Heart left ventricle (tissue), 16 donors: ENCODE measurements at regions of chr7 and their contacts with region 1.

Region 1: DNA sequence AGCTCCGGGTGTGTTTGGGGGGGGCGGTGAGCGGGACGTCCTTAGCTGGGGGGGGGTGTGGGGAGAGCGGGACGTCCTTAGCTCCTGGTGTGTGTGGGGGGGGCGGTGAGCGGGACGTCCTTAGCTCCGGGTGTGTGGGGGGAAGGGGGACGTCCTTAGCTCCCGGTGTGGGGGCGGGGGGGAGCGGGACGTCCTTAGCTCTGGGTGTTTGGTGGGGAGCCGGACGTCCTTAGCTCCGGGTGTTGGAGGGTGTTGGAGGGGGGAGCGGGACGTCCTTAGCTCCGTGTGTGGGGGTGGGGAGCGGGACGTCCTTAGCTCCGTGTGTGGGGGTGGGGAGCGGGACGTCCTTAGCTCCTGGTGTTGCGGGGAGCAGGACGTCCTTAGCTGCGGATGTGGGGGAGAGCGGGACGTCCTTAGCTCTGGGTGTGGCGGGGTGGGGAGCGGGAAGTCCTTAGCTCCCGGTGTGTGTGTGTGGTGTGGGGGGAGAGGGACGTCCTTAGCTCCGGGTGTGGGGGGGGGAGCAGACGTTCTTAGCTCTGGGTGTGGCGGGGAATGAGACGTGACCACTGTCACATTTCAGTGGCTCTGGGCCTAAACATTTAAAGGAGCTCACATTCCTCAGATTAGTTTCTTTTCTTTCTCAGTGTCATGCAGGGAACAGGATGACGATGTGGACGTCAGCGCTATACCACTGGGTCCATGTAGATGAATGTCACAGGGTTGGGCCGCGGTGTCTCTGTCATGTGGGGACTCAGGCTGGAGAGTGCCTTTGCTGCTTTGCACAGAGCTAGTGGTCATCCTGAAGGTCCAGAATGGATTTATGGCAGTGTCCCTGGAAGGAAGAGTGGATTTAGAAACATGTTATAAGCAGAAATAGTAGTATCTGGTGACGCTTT is 7.5 kb downstream of the DYNC2I1 start:
- DNase-seq: peak; percentile 82 to 93 (median 89)
- ATAC-seq: peak; percentile 84 to 91 (median 89)
- H3K4me3 ChIP-seq: peak overlapping the region in 11 of 12 donors; percentile 27 to 59 (median 55)
- H3K27ac ChIP-seq: peak overlapping the region; percentile 85 to 98 (median 92)
- H3K4me1 ChIP-seq: peaks cover 4 to 56% (median 30%) of the 10 kb centered on the region in 12 donors
- H3K27me3 ChIP-seq: no peaks in the 10 kb centered on the region
- CTCF ChIP-seq: no peak
- POLR2A ChIP-seq: peak in 1 of 2 donors; percentile 56

Region 2: DNA sequence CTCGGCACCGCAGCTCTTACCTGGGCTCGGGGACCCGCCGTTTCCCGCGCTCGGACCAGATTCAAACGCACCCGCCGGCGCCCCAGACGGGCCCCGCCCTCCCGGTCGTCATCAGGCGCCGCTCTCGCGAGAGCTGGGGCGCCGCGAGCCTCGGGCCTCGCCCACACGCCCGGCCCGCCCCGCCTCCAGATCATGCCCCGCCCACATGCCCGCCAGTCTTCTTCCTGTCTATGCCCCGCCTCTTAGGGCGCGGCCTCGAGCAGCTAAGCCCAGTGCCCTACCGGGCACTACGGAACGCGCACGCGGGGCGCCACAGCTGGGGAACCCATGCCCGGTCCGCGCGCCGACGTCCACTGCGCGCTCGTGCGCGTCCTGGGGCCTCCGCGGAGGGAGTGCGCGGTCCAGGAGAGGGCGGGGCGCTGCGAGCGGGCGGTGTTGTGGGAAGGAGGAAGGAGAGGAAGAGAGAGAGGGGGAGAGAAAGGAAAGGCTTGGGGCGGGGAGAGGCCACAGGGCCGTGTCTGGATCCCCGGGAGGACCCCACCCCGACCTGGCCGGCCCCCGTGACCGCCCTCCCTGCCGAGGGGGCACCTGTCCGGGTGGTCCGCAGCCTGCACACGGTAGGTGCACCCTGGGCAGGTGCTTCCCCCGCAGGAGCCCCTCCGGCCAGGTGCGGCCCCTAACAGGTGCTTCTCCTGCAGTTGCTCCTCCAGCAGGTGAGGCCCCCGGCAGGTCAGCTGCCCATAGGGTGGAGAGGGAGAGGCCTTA is 159.0 kb before region 1 on chr7 and contains the start of gene NCAPG2:
- intact Hi-C with region 1: loop called in 2 of 10 experiments (anchors 10 kb)
- DNase-seq: peak; percentile 98 to 99 (median 99)
- ATAC-seq: peak; percentile 97 to 99 (median 99)
- H3K4me3 ChIP-seq: peak within 1 kb of the TSS; percentile 68 to 98 (median 82)
- H3K27ac ChIP-seq: peak within 1 kb of the TSS; percentile 33 to 96 (median 88)
- H3K4me1 ChIP-seq: peaks cover 0 to 18% (median 8%) of the 10 kb centered on the region in 12 donors
- H3K27me3 ChIP-seq: no peaks in the 10 kb centered on the region
- CTCF ChIP-seq: peak in 10 of 12 donors; percentile 10 to 44 (median 18)
- POLR2A ChIP-seq: peak; percentile 63 to 97
- total RNA-seq, gene NCAPG2: 2.8 to 12.5 (median 4.7) TPM

Region 3: DNA sequence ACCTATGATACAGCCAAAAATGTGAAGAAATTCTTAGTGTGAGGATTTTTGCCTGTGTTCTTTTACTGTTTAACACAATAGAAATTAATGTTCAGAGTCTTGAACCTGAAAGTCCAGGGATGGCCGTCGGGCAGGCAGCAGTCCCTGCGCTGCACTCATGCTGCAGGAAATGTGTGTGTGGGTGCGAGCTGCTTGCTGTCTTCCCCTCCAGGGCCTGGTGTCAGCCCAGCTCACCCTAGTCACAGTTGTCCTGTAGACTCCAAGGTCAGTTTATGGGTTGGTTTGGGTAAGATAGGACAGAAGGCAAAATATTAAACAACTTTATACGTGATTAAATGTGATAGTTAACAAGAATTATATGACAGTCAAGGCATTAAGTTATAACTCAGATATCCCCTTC is 71.2 kb after region 1 on chr7:
- intact Hi-C with region 1: no loop called
- DNase-seq: no peak
- ATAC-seq: no peak
- H3K4me3 ChIP-seq: no peak overlapping the region
- H3K27ac ChIP-seq: no peak overlapping the region
- H3K4me1 ChIP-seq: no peaks in the 10 kb centered on the region
- H3K27me3 ChIP-seq: no peaks in the 10 kb centered on the region
- CTCF ChIP-seq: no peak
- POLR2A ChIP-seq: no peak